ENCODE measurements at regions of chr15 and their contacts with region 1.

Region 1: DNA sequence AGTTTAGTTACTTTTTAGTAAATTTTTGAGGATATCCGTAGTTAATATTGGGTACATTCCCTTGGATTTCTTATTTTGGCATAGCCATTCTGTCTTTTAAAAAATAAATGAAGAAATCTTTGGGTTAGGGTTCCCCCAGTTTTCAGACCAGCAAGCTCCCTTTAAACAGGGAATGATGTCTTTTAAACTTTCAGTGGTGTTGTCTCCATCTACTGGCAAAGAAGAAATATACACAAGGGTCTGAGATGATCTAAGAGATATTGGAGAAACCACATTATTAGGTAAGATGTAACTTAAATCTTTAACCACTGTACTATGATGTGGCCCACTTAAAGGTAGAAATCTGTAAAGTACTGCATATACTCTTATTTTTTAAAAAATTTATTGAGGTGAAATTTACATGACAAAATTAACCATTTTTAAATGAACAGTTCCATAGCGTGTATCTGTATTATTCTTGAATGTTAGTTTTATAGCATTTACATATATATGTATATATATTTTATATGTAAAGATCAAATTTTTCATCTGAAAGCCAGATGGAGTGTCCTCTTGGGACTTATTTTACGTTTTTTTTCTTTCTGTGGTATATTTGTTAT is 35.1 kb upstream of the EIF3J start:
- DNase-seq: no peak
- ATAC-seq: peak; percentile 47
- H3K4me3 Mint-ChIP-seq: no peak overlapping the region
- H3K27ac Mint-ChIP-seq: no peak overlapping the region
- H3K4me1 Mint-ChIP-seq: peaks cover 10% of the 10 kb centered on the region
- H3K27me3 Mint-ChIP-seq: no peaks in the 10 kb centered on the region

Region 2: GRCh38 chr15:44215594-44215993 is 286.3 kb before region 1 on chr15:
- CTCF ChIA-PET with region 1: interaction called, 11 read pairs
- POLR2A ChIA-PET with region 1: no interaction called
- DNase-seq: no peak
- ATAC-seq: no peak
- H3K4me3 Mint-ChIP-seq: no peak overlapping the region
- H3K27ac Mint-ChIP-seq: no peak overlapping the region
- H3K4me1 Mint-ChIP-seq: no peaks in the 10 kb centered on the region
- H3K27me3 Mint-ChIP-seq: peaks cover 17% of the 10 kb centered on the region

Region 3: DNA sequence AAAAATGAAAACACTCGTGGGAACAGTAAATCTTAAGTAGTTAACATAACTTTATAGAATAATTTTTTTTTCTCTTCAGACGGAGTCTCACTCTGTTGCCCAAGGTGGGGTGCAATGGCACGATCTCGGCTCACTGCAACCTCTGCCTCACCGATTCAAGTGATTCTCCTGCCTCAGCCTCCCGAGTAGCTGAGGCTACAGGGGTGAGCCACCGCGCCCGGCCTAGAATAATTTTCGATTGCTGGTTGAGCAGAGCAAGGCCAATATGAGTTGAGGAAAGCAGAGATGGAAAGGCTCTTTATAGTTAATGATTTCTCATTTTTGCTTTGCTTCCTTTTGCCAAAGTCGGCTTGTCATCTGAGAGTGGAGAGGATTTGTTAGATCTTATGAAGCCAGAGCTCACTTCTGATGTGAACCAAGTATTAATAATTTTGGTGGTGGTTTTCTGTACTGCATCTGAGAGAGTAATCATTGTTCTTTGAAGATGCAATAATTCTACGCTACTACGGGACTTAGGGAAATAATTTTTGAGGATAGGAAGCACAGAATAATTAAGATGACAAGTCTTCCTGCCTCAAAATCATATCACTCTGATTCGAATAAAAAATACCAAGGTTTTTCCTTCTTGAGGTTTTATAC is 214.9 kb before region 1 on chr15:
- CTCF ChIA-PET with region 1: interaction called, 21 read pairs
- POLR2A ChIA-PET with region 1: interaction called, 5 read pairs
- DNase-seq: no peak
- ATAC-seq: no peak
- H3K4me3 Mint-ChIP-seq: peak overlapping the region; percentile 88
- H3K27ac Mint-ChIP-seq: peak overlapping the region; percentile 93
- H3K4me1 Mint-ChIP-seq: peaks cover 35% of the 10 kb centered on the region
- H3K27me3 Mint-ChIP-seq: peaks cover 8% of the 10 kb centered on the region

Region 4: DNA sequence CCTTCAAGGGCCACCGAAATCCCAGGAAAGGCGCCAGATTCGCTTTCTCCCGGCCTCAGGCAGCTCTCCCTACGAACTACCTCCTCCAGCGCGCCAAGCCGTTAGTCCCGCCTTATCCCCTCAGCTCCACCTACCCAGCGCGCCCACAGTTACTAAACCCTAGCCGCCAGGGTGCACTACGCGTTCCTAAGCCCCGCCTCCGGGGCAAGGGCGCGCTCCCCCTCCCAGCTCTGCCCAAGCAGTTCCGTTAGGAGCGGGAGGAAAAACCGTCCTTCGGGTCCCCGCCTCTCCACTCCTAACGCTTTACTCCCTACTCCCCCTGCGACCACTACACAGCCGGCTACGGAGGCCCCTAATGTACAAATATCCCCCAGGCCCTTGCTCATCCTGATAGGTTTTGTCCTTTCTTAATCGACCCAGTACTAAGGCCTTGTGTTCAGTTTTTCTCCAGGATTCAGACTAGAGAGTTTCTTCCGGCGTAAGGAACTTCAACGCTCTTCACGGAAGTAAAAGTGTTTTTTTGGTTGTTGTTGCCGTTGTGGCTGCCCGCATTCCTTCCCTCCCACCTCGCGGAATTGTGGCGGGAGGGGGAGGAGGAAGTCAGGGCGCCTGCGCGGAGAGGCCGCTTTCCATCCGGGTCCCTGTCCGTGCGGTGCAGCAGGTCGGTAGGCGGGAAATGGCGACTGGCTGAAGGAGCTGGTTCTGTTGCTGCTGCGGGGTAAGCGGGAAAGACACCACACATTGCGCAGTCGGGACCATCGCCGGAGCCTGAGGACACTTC is 74.7 kb before region 1 on chr15 and contains the start of gene CTDSPL2:
- CTCF ChIA-PET with region 1: interaction called, 28 read pairs
- POLR2A ChIA-PET with region 1: interaction called, 7 read pairs
- DNase-seq: peak; percentile 96
- ATAC-seq: peak; percentile 98
- H3K4me3 Mint-ChIP-seq: peak within 1 kb of the TSS; percentile 96
- H3K27ac Mint-ChIP-seq: peak within 1 kb of the TSS; percentile 99
- H3K4me1 Mint-ChIP-seq: peaks cover 43% of the 10 kb centered on the region
- H3K27me3 Mint-ChIP-seq: no peaks in the 10 kb centered on the region
- total RNA-seq, gene CTDSPL2: 76.6 to 79.0 TPM

Region 5: GRCh38 chr15:44447772-44448376 is 54.0 kb before region 1 on chr15:
- CTCF ChIA-PET with region 1: no interaction called
- POLR2A ChIA-PET with region 1: no interaction called
- DNase-seq: no peak
- ATAC-seq: no peak
- H3K4me3 Mint-ChIP-seq: no peak overlapping the region
- H3K27ac Mint-ChIP-seq: no peak overlapping the region
- H3K4me1 Mint-ChIP-seq: peaks cover 14% of the 10 kb centered on the region
- H3K27me3 Mint-ChIP-seq: no peaks in the 10 kb centered on the region

Region 6: DNA sequence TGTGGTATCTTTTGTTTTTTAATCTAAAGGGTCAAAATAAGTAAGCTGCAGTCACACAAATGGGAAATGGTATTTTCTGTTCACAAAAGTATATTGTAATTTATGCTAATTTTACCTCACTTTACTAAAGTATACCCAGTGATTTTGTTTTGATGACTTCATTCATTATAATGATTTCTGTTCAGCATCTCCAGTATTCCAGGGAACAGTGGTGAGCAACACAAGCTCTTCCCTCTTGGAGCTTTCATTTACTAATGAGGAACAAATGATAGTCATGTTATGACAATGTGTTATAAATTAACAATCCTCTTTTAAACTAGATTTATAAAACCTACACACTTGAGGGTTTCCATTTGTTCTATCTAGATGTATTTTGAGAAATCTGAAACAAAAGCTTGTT is 14.6 kb after region 1 on chr15:
- CTCF ChIA-PET with region 1: interaction called, 13 read pairs
- POLR2A ChIA-PET with region 1: interaction called, 3 read pairs
- DNase-seq: no peak
- ATAC-seq: no peak
- H3K4me3 Mint-ChIP-seq: no peak overlapping the region
- H3K27ac Mint-ChIP-seq: no peak overlapping the region
- H3K4me1 Mint-ChIP-seq: no peaks in the 10 kb centered on the region
- H3K27me3 Mint-ChIP-seq: no peaks in the 10 kb centered on the region